Heart right ventricle (tissue), 16 donors: ENCODE measurements at regions of chr5 and their contacts with region 1.

Region 1: GRCh38 chr5:173864126-173865050 is 23.8 kb upstream of the CPEB4 start:
- DNase-seq: peak in 1 of 2 donors; percentile 18
- ATAC-seq: no peak
- H3K4me3 ChIP-seq: no peak overlapping the region
- H3K27ac ChIP-seq: peak overlapping the region in 2 of 10 donors; percentile 13 to 71
- H3K4me1 ChIP-seq: peaks cover 0 to 57% (median 5%) of the 10 kb centered on the region in 9 donors
- H3K27me3 ChIP-seq: no peaks in the 10 kb centered on the region
- CTCF ChIP-seq: no peak

Region 2: DNA sequence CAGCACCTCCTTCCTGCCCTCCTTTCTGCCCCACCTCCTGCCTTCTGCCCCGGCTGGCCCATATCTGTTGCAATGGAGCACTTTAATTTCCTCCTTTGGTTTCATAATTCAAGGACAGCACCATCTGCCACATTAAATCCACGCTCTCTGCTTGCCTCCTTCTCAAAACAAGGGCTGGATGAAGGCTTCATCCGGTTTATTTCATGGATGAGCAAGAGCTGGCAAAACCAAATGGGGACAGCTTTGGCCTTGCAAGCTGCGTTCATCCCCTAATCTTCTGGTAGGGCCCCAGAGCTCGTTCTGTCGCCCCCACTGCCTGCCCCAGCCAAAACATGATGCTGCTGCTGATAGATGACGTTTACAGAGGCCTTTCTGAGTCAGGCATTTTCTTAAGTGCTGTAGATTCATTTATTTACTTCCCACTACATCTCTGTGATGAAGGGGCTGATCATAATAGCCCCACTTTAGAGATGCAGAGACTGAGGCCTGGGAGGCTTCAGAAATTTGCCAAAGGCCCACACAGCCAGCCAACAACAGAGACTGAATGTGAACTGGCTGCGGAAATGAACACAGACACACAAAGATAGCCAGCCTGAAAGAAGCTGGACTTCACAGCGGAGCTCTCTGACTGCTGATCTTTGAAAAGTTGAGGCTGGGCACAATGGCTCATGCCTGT is 91.9 kb before region 1 on chr5:
- intact Hi-C with region 1: loop called in 2 of 10 experiments (anchors 5 kb)
- DNase-seq: no peak
- ATAC-seq: no peak
- H3K4me3 ChIP-seq: no peak overlapping the region
- H3K27ac ChIP-seq: peak overlapping the region in 6 of 10 donors; percentile 4 to 86 (median 50)
- H3K4me1 ChIP-seq: peaks cover 0 to 39% (median 1%) of the 10 kb centered on the region in 9 donors
- H3K27me3 ChIP-seq: no peaks in the 10 kb centered on the region
- CTCF ChIP-seq: no peak